ENCODE measurements at regions of chr13 and their contacts with region 1.

Region 1: DNA sequence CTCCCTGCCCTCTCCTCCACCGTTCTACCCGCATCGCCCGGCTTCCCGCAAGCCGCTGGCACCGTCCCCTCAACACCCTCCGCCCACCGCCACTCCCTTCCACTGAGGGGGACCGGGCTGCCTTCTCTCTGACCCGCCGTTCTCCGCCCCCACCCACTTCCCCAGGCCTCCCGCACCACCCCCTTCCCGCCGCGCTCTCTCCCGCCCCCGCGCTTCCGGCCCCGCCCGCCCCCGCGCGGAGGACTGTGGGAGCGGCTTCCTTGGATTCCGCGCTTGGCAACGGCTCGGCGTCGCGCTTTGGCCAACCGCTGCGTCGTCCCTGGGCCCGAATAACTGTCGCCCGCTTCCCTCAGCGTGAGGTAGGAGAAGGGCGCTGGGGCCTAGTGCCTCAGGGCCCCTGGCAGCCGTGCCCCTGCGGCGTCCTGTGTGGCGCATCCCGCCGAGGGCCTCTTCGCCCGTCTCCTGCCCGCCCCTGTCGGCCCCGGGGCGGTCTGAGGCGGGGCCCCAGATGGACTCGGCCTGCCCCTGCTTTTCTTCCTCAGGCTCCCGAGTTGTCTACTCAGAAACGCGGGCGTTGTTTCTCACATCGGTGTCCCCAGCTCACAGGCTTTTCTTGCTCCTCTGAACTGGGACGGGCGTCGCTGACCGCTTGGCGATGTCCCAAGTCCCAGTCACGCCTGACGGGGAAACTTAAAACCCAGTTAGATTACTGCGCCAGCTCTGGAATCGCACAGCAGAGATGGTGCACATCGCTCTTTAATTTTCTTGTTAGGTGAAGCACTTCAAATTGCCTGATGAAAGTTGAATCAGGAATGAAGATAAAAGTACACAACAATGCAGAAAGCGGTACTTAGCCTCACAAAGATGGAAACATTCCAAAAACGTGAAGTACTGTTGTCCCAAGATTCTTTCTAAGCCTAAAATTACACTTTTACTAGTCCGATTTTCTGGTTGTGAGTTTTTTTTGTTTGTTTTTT is at the start of gene IFT88:
- DNase-seq: peak; percentile 91
- ATAC-seq: peak; percentile 98
- total RNA-seq, gene IFT88: 8.4 to 8.8 TPM

Region 2: DNA sequence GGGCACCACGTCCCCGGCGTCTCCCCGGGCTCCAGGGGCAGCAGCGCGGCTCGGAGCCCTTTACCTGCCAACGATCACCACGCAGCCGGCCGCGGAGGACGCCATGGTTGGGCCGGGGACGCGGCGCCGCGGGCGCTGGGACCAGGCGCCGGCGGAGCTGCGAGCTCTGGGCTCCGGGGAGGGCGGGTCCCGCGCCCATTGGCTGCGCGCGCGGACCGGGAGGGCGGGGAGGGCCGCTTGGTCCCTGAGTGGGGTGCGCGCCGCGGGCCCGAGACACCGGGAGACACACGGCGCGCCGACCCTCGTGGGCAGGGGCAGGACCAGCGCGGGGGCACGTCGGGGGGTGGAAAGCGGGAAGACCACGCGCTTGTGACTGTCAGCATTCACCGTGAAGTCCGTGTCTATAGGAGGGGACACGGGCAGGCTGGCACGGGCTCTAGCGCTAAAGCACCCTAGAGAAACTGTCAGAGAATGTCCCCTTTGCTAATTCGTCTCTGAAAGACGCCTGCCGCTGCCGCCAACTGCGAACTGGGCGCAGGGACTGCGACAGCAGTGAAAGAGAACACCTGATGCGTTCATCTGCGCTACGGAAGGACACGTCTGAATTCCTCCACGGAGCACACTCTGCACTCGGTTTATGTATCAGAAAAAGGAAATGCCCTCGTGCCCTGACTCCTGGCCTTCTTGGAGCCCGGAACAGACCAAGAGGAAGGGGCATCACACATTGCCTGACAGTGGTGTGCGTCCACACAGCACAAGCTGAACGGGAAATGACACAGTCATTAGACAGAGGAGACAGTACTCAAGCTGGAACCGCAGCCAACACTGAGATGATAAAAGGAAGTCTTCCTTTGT is 41.3 kb before region 1 on chr13 and contains the start of gene CRYL1:
- intact Hi-C with region 1: loop called (anchors 2 to 5 kb)
- DNase-seq: peak; percentile 87
- ATAC-seq: peak; percentile 99
- total RNA-seq, gene CRYL1: 24.9 to 31.0 TPM

Region 3: DNA sequence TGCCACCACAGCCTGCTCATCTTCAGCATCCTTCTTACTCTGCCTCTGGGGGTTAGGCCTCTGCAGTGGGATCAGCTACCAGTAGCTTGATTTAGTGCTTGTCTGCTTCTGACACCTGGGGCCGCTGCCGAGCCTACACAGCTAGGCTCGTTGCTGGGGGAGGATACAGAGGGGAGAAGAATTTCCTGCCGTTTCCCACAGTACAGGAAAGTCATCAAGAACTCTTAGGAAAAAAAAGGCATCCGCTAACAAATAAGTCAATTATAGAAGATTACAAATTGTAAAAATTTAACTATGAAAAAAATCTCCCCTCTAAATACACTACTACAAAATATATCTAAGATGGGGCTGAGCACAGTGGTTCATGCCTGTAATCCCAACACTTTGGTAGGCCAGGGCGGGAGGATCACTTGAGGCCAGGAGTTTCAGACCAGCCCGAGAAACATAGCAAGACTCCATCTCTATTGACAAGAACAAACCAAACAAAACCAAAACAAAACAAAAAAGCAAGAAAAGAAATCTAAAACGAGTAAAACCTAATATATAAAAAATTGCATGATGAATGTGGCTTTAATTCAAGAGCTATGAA is 467.5 kb after region 1 on chr13:
- intact Hi-C with region 1: no loop called
- DNase-seq: no peak
- ATAC-seq: peak; percentile 67 to 69